ENCODE measurements at regions of chr5 and their contacts with region 1.

Region 1: DNA sequence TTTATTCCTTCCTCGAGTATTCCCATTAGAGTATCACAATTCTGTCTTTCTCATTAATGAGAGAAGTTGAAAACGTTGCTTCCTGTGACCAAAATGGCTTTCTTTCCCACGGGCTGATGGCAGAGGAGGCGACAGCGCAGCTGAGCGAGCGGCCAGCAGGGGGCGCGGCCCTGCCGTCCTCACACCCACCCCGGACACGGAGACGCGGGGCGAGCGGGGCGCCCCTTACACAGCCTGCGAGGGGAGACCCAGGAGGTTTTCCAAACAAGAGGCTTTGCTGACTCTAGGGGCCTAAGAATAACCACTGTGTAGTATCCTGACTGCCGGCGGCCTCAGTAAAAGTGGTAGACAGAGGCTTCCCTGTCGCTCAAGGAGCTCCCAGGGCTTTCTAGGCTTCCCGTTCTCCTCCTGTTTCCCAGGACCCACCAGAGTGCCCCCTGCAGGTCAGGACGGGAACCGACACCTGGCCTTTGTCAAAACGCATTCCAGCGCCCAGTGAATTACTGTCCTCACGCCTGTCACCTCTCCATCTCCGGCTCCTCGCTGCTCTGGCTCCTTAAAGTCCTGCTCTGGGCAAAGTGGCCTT is 27.3 kb upstream of the FGF1 start:
- H3K4me3 ChIP-seq: peak overlapping the region; percentile 59
- H3K27ac ChIP-seq: peak overlapping the region; percentile 28; the same call in 1 of the 2 replicates
- H3K4me1 ChIP-seq: no peaks in the 10 kb centered on the region
- CTCF ChIP-seq: peak; percentile 97

Region 2: DNA sequence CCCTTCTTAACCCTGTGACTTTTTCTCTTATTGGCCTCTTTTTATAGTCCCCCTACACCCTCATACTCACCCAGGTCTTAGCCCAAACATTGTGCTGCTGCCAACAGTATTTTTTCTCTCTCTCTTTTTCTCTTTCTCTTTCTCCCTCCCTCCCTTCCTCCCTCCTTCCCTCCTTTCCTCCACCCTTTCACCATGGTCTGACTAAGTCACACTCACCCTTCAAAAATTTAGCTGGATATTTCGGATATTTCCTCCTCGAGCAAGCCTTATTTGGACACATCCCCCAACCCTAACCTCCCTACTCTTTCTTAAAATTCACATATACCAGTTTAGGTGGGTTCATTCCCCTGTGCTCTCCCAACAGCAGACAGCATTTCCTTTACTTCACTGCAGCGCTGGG is 92.0 kb before region 1 on chr5:
- CTCF ChIA-PET with region 1: interaction called, 15 read pairs
- POLR2A ChIA-PET with region 1: no interaction called
- H3K4me3 ChIP-seq: no peak overlapping the region
- H3K27ac ChIP-seq: no peak overlapping the region
- H3K4me1 ChIP-seq: no peaks in the 10 kb centered on the region
- CTCF ChIP-seq: no peak

Region 3: DNA sequence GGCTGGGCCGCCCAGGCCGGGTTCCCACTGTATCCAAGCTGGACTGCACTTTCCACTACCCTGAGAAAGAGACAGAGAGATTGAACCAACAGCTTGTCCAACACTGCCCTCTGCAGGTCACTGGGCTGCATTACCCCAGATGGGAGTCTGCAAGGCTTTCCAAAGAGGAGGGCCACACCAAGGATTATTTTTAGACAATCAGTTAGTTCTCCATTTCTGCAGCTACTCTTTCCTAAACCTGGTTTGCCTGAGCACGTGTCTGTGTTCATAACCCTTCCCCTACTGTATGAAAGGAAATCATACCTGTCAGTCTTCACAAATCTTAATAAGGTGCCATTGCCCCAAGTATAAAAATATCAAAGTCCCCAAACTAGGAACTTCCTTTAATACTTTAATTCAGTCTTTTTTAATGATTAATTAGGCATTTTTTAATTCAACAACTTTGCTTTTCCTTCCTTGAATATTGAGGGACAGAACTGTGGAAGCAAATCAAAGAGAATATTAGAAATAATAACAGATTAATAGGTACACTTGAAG is 14.0 kb before region 1 on chr5:
- CTCF ChIA-PET with region 1: interaction called, 57 read pairs
- POLR2A ChIA-PET with region 1: no interaction called
- H3K4me3 ChIP-seq: no peak overlapping the region
- H3K27ac ChIP-seq: no peak overlapping the region
- H3K4me1 ChIP-seq: peaks cover 16% of the 10 kb centered on the region
- CTCF ChIP-seq: peak; percentile 92

Region 4: DNA sequence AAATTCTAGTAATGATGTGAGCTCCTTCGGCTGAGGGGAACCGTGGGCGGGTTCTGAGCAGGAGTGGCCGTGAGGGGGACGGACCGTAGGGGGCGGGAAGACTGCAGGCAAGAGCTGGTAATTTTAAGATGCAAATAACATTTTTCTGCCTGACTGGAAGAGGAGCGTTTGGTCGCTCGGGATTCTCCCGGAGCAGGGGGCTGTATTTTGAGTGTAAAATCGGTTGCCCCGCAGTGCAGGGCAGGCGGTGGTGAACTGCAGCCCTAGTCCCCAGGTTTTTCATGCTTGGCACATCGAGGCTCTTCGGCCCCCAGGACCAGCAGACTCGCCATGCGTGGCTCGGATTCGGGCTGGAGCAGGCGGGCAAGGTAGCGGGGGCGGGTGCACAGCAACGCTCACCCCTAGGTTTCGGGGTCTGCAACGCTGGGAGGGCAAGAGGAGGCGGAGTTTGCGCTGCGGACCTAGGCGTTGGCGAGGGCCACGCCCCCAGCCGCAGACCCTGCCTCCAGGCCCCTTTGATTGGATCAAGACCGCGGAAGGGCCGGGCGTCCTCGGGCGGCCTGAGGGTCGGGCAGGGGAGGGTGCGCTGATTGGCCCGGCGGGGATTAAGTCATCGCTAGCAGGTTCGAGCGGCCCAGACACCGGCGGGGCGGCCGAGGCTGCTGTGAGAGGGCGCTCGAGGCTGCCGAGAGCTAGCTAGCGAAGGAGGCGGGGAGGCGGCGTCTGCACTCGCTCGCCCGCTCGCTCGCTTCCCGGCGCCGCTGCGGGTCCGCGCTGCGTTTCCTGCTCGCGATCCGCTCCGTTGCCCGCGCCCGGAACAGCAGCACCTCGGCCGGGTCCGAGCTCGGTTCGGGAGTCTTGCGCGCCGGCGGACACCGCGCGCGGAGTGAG is 56.8 kb after region 1 on chr5 and contains the start of gene ARHGAP26:
- CTCF ChIA-PET with region 1: interaction called, 10 read pairs
- POLR2A ChIA-PET with region 1: interaction called, 4 read pairs
- H3K4me3 ChIP-seq: peak within 1 kb of the TSS; percentile 93
- H3K27ac ChIP-seq: peak within 1 kb of the TSS; percentile 86
- H3K4me1 ChIP-seq: 0 out of 2 replicates have a peak, but pooled peaks cover 4% of the 10 kb centered on the region
- CTCF ChIP-seq: peak; percentile 71

Region 5: DNA sequence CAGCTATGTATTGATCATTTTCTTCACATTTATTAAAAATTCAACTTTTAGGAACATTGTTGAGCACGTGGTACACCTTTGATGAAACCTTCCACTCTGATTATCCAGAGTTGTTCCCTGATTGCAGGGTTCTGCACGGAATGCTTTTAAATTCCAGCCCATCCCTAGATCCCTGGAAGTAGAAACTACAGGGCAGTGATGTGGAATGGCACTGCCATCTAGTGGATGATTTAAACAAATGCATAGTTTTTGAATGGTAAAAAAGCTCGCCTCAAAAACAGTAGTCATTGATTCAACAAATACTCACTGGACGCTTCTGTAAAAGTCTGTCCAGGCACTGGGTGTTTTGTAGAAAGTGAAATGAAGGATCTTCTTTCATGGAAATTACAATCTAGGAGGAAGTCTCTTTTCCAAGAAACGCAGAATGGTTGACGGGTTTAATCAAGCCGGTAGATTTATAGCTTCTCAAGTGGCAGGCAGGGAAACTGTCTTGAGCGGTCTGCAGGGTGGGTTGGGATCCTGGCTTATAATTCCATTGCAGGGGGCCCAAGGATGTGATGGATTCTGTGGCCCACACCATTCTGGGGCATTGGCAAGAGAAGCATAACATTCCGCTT is 175.4 kb after region 1 on chr5:
- CTCF ChIA-PET with region 1: interaction called, 572 read pairs
- POLR2A ChIA-PET with region 1: no interaction called
- H3K4me3 ChIP-seq: no peak overlapping the region
- H3K27ac ChIP-seq: no peak overlapping the region
- H3K4me1 ChIP-seq: no peaks in the 10 kb centered on the region
- CTCF ChIP-seq: peak; percentile 26; the same call in 1 of the 2 replicates

Measured in HEK293 (cell line).